ENCODE measurements at regions of chrX and their contacts with region 1.

Region 1: GRCh38 chrX:18938710-18939109 is 45.2 kb downstream of the PHKA2 start:
- DNase-seq: no peak
- ATAC-seq: no peak
- H3K4me3 ChIP-seq: no peak overlapping the region
- H3K4me3 Mint-ChIP-seq: no peak overlapping the region
- H3K27ac ChIP-seq: no peak overlapping the region
- H3K27ac Mint-ChIP-seq: no peak overlapping the region
- H3K4me1 ChIP-seq: no peaks in the 10 kb centered on the region
- H3K4me1 Mint-ChIP-seq: no peaks in the 10 kb centered on the region
- H3K27me3 ChIP-seq: no peaks in the 10 kb centered on the region
- H3K27me3 Mint-ChIP-seq: no peaks in the 10 kb centered on the region

Region 2: GRCh38 chrX:18457000-18457399 is 481.7 kb before region 1 on chrX:
- CTCF ChIA-PET with region 1: no interaction called
- POLR2A ChIA-PET with region 1: interaction called in 1 of 2 experiments, 13 read pairs
- DNase-seq: no peak
- ATAC-seq: no peak
- H3K4me3 ChIP-seq: no peak overlapping the region
- H3K4me3 Mint-ChIP-seq: no peak overlapping the region
- H3K27ac ChIP-seq: no peak overlapping the region
- H3K27ac Mint-ChIP-seq: no peak overlapping the region
- H3K4me1 ChIP-seq: no peaks in the 10 kb centered on the region
- H3K4me1 Mint-ChIP-seq: peaks cover 0 to 12% (median 4%) of the 10 kb centered on the region in 3 donors
- H3K27me3 ChIP-seq: no peaks in the 10 kb centered on the region
- H3K27me3 Mint-ChIP-seq: peaks cover 0 to 3% of the 10 kb centered on the region in 2 donors

Region 3: GRCh38 chrX:18961686-18962085 is 23.0 kb after region 1 on chrX:
- CTCF ChIA-PET with region 1: no interaction called
- POLR2A ChIA-PET with region 1: interaction called in 1 of 2 experiments, 23 read pairs
- DNase-seq: no peak
- ATAC-seq: no peak
- H3K4me3 ChIP-seq: no peak overlapping the region
- H3K4me3 Mint-ChIP-seq: no peak overlapping the region
- H3K27ac ChIP-seq: no peak overlapping the region
- H3K27ac Mint-ChIP-seq: no peak overlapping the region
- H3K4me1 ChIP-seq: no peaks in the 10 kb centered on the region
- H3K4me1 Mint-ChIP-seq: peaks cover 28 to 35% (median 29%) of the 10 kb centered on the region in 3 donors
- H3K27me3 ChIP-seq: no peaks in the 10 kb centered on the region
- H3K27me3 Mint-ChIP-seq: no peaks in the 10 kb centered on the region

Region 4: GRCh38 chrX:19110642-19111041 is 171.9 kb after region 1 on chrX:
- CTCF ChIA-PET with region 1: no interaction called
- POLR2A ChIA-PET with region 1: no interaction called
- DNase-seq: no peak
- ATAC-seq: no peak
- H3K4me3 ChIP-seq: no peak overlapping the region
- H3K4me3 Mint-ChIP-seq: no peak overlapping the region
- H3K27ac ChIP-seq: no peak overlapping the region
- H3K27ac Mint-ChIP-seq: no peak overlapping the region
- H3K4me1 ChIP-seq: no peaks in the 10 kb centered on the region
- H3K4me1 Mint-ChIP-seq: no peaks in the 10 kb centered on the region
- H3K27me3 ChIP-seq: peaks cover 3% of the 10 kb centered on the region in 2 experiments
- H3K27me3 Mint-ChIP-seq: peaks cover 35 to 43% of the 10 kb centered on the region in 2 donors

Measured in T-cell (primary cell).